ENCODE measurements at regions of chr6 and their contacts with region 1.

Region 1: DNA sequence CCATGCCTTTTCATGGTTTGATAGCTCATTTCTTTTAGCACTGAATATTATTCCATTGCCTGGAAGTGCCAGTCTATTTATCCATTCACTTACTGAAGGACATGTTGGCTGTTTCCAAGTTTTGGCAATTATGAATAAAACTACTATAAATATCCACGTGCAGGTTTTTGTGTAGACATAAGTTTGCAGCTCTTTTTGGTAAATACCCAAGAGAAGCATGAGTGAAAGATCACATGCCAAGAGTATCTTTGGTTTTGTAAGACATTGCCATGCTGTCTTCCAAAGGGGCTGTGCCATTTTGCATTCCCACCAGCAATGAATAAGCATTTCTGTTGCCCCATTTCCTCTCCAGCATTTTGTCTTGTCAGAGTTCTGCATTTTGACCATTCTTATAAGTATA is 120.9 kb downstream of the MANEA start:
- DNase-seq: no peak
- ATAC-seq: no peak
- H3K4me3 ChIP-seq: no peak overlapping the region
- H3K27ac ChIP-seq: no peak overlapping the region
- H3K4me1 ChIP-seq: no peaks in the 10 kb centered on the region
- H3K27me3 ChIP-seq: no peaks in the 10 kb centered on the region
- CTCF ChIP-seq: no peak

Region 2: DNA sequence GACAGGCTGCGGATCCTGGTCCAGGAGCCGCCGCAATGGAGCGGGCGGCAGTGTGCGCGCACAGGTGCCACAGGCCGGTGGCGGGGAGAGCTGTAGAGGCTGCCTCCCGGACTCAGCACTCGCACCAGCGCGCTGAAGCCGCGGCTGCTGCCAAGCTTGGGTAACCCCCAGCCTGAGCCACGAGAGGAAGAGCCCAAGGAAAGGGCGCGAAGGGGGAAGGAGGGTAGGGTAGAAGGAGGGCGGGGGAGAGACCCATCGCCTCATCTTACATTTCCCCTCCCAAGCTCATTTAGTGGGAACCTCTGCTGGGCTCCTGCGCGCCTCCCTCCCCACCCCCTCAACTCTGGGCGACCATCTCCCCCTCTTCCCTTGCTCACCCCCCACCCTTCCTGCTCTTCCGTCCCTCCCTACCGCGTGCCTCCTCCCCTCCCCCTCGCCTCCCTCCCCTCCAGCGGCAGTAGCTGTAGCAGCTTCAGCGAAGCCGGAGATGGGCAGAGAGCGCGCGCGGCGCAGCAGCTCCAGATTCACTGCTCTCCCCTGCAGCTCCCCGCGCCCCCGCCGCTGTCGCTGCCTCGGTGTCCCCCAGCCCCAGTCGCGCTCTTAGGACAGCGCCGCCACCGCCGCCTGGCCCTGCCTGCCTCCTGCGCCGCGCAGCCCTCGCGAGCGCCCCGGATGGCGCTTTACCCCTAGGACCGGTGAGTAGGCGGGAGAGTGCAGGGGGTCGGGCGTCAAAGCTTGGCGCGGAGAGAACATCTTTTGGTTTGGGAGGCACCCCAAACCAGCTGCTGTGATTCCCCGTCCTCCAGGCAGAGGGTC is 317.5 kb after region 1 on chr6 and contains the start of gene FUT9:
- CTCF ChIA-PET with region 1: no interaction called
- POLR2A ChIA-PET with region 1: interaction called, 14 read pairs
- in situ Hi-C with region 1: no loop called
- intact Hi-C with region 1: no loop called
- DNase-seq: no peak
- ATAC-seq: peak; percentile 92
- H3K4me3 ChIP-seq: peak within 1 kb of the TSS; percentile 26 to 34
- H3K27ac ChIP-seq: no peak within 1 kb of the TSS
- H3K4me1 ChIP-seq: no peaks in the 10 kb centered on the region; the same call in 1 of the 2 replicates
- H3K27me3 ChIP-seq: peaks cover 12% of the 10 kb centered on the region
- CTCF ChIP-seq: peak; percentile 20
- total RNA-seq, gene FUT9: not detected

Region 3: GRCh38 chr6:97626671-97627441 is 1928.6 kb after region 1 on chr6:
- CTCF ChIA-PET with region 1: no interaction called
- POLR2A ChIA-PET with region 1: no interaction called
- in situ Hi-C with region 1: no loop called
- intact Hi-C with region 1: no loop called
- DNase-seq: no peak
- ATAC-seq: no peak
- H3K4me3 ChIP-seq: peak overlapping the region; percentile 27 to 33
- H3K27ac ChIP-seq: no peak overlapping the region
- H3K4me1 ChIP-seq: no peaks in the 10 kb centered on the region
- H3K27me3 ChIP-seq: no peaks in the 10 kb centered on the region
- CTCF ChIP-seq: no peak

Measured in Panc1 (cell line).